Gastrocnemius medialis (tissue), 4 donors: ENCODE measurements at regions of chr9 and their contacts with region 1.

Region 1: DNA sequence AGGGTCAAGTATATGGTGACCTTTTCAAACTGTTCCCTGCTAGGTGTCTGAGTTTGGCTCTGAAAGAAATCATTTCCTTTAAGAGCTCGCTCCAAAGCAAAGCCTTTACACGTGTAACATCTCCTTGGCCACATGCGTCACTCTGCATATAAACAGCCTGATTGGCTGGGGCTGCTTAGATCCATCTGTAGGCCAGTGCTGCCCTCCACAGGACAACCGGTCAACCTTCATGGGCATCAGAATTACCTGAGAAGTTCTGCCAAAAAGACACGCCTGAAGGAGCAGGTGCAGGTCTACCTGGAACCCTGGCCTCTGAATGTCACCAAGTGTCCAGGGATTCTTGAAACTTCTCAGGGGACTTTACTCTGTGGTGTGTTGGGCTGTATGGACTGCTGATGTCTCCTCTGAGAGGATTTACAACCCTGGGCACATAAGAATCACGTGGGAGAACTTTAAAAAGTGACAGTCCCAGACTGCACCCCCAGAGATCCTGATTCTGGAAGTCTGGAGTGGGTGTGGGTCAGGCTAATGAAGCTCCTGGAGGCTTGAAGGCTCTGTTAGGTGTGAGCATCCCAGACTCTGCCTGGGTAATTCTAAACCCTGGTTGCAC is 497.6 kb downstream of the GADD45G start:
- DNase-seq: peak; percentile 81 to 83
- ATAC-seq: peak; percentile 59 to 80
- H3K4me3 ChIP-seq: no peak overlapping the region
- H3K27ac ChIP-seq: no peak overlapping the region
- H3K4me1 ChIP-seq: peaks cover 30 to 32% of the 10 kb centered on the region in 2 donors
- H3K27me3 ChIP-seq: no peaks in the 10 kb centered on the region
- CTCF ChIP-seq: peak; percentile 79 to 89 (median 80)
- POLR2A ChIP-seq: no peak

Region 2: DNA sequence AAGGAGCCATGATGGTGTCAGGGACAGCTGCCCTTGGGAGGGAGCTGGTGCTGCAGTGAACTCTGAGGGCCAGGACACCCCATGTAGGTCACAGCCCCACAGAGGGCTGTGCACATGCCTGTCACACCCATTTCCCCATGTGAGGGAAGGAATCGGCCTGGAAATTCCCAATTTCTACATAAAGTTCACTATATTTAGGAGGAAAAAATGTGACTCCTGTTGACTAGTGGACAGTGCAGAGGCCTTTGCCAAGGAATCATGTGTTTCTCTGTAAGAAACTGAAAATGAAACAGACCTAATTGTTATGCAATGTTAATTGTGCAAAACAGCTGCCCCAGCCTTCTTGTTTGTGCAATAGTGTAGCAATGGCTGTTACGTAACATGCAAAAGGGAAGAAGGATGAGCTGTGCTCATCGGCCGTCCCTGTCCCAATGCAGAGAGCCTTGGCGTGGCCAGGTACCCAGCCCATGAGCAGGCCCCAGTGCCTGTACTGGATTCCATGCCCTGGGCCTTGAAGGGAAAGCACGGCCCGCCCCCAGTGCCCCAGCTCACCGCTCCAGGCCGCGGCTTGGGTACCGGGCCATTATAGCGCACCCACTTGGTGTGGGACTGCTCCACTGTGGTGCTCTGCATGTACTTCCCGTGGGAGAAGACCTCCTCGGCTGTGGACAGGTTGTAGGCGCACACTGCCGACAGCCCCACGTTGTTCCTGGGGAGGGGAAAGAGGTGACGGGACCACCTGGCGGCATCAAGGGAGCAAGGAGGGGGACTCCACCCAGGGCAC is 714.1 kb before region 1 on chr9:
- in situ Hi-C with region 1: no loop called
- intact Hi-C with region 1: loop called (anchors 5 kb)
- DNase-seq: peak; percentile 85 to 94
- ATAC-seq: peak; percentile 83 to 87
- H3K4me3 ChIP-seq: no peak overlapping the region
- H3K27ac ChIP-seq: peak overlapping the region; percentile 79 to 93 (median 88)
- H3K4me1 ChIP-seq: peaks cover 20 to 26% of the 10 kb centered on the region in 2 donors
- H3K27me3 ChIP-seq: no peaks in the 10 kb centered on the region
- CTCF ChIP-seq: peak in 2 of 5 experiments; percentile 10 to 38
- POLR2A ChIP-seq: peak in 1 of 2 donors; percentile 19

Region 3: DNA sequence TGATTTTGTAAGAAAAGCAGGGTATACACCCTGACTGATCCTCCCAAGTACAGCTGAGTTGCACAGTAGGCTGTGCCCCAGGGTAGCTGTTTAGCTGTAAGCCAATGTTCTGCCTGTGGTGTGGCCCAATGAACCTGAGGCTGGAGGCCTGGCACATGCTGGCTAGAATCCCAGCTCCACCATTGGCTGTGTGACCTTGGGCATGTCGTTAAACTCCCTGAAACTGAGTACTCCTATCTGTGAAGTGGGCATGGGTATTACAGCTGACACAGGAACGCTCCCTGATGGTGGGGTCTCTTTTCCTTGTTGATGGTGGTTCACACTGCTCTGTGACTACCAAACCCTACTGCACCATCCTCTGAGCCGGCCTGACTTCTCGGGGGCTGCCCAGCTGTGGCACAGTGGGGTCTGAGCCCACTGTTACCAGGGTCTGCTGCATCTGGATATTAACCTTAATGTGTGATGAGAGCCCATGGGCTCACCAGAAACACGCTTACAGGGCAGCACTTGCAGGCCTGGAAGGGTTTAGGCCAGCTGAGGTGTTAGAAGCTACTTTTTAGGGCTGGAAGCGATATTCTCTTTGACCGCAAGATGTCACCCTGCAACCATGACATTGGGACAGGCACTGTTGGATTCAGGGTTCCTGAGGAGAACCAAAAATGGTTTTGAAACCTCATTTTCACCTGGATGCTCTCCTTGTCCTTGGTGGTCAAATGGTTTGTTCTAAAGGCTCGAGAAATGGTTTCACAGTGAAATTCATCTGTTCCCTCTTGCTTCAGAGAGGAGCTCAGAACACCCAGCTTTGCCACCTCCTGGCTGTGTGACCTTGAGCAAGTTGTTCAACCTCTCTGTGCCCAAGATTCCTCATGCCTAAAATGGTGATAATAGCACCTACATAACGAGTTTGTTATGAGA is 504.4 kb before region 1 on chr9:
- in situ Hi-C with region 1: loop called (anchors 5 kb)
- intact Hi-C with region 1: loop called (anchors 1 kb)
- DNase-seq: peak in 1 of 2 donors; percentile 52
- ATAC-seq: peak; percentile 55 to 59
- H3K4me3 ChIP-seq: no peak overlapping the region
- H3K27ac ChIP-seq: no peak overlapping the region
- H3K4me1 ChIP-seq: no peaks in the 10 kb centered on the region
- H3K27me3 ChIP-seq: no peaks in the 10 kb centered on the region
- CTCF ChIP-seq: peak; percentile 73 to 87 (median 82)
- POLR2A ChIP-seq: no peak

Region 4: DNA sequence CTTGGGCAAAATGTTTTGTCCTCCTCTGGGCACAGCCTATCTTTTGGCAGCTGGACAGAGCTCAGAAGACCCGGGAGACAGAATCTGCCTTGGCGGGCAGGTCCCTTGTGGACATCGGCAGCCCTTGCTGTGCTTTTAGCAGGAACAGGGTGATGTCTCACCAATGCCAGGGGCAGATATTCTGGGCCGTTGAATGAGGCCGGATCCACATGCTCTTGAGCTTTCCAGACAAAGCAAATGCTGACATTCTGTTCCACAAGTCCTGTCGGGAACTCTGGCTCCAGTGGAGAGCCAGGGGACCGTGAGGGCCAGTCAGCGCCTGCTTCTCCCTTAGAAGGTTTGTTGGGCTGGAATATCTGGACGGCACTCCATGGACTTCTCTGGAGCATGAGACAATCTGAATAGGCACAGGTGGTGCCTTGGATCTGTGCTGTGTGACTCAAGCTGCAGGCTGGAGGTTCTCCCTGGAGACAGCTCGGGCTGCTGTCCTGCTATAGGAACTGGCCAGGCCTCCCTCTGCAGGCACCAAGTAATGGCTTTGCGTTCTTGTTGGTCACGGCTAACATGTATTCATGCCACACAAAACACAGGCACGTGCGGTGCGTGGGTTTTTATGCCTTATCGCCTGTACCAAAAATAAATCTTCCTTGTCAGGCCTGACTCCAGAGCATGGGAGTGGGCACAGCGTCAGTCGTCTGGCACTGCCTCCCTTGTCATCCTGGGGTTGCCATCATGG is 417.3 kb before region 1 on chr9:
- in situ Hi-C with region 1: no loop called
- intact Hi-C with region 1: loop called (anchors 2 kb)
- DNase-seq: peak; percentile 80 to 84
- ATAC-seq: peak; percentile 89 to 91
- H3K4me3 ChIP-seq: no peak overlapping the region
- H3K27ac ChIP-seq: peak overlapping the region; percentile 64 to 90 (median 78)
- H3K4me1 ChIP-seq: peaks cover 18 to 24% of the 10 kb centered on the region in 2 donors
- H3K27me3 ChIP-seq: no peaks in the 10 kb centered on the region
- CTCF ChIP-seq: peak in 1 of 5 experiments; percentile 13
- POLR2A ChIP-seq: no peak

Region 5: GRCh38 chr9:89878687-89879086 is 223.7 kb before region 1 on chr9:
- in situ Hi-C with region 1: no loop called
- intact Hi-C with region 1: loop called (anchors 5 kb)
- DNase-seq: peak; percentile 93 to 98
- ATAC-seq: peak; percentile 80 to 86
- H3K4me3 ChIP-seq: no peak overlapping the region
- H3K27ac ChIP-seq: peak overlapping the region; percentile 82 to 96 (median 90)
- H3K4me1 ChIP-seq: peaks cover 59 to 66% of the 10 kb centered on the region in 2 donors
- H3K27me3 ChIP-seq: no peaks in the 10 kb centered on the region
- CTCF ChIP-seq: no peak
- POLR2A ChIP-seq: peak; percentile 54 to 70

Region 6: GRCh38 chr9:89941875-89942274 is 160.5 kb before region 1 on chr9:
- in situ Hi-C with region 1: no loop called
- intact Hi-C with region 1: loop called (anchors 10 kb)
- DNase-seq: peak in 1 of 2 donors; percentile 43
- ATAC-seq: peak; percentile 99 to 100
- H3K4me3 ChIP-seq: no peak overlapping the region
- H3K27ac ChIP-seq: peak overlapping the region; percentile 63 to 75 (median 68)
- H3K4me1 ChIP-seq: peaks cover 18 to 24% of the 10 kb centered on the region in 2 donors
- H3K27me3 ChIP-seq: no peaks in the 10 kb centered on the region
- CTCF ChIP-seq: no peak
- POLR2A ChIP-seq: no peak

Region 7: DNA sequence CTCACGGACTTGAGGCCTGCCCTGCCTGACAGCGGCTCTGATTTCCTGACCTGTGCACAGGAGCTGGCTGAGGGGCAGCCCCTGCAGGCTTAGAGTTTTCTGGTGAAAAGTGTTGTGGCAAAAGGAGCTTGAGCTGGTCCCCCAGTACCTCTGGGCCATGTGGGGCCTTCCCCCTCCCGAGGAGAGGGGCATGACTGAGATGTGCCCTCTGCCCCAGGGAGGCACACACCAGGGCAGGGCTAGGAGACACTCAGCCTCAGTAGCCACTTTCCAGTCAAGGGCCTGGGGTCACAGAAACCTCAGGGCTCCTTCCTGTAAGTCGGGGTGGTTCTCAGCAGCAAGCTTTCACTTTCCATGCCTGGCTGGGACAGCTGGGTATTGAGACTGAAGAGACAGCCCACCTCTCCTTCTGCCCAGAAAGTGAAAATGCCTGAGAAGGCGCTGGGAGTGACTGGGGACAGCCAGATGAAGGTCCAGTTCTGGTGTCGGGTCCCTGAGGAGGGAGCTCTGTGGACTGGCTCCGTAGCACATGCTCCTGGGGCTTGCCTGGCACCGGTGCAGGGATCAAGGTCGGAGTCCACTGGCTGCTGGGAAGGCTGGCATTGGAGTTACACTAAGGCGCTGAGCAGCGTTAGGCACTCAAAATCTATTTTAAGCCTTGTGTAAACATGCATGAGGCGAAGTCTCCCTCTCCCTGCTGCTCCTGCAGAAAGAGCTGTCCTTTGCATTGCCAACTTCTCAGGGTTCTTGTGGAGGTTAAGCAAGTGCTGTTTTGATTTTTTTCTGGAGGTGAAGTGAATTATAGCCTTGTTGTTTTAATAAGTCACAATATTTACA is 102.6 kb before region 1 on chr9:
- in situ Hi-C with region 1: loop called in 1 of 4 experiments (anchors 25 kb)
- intact Hi-C with region 1: loop called (anchors 2 kb)
- DNase-seq: peak; percentile 82 to 89
- ATAC-seq: peak; percentile 94 to 96
- H3K4me3 ChIP-seq: peak overlapping the region in 3 of 4 donors; percentile 36 to 42 (median 41)
- H3K27ac ChIP-seq: peak overlapping the region; percentile 72 to 89 (median 82)
- H3K4me1 ChIP-seq: peaks cover 45 to 46% of the 10 kb centered on the region in 2 donors
- H3K27me3 ChIP-seq: no peaks in the 10 kb centered on the region
- CTCF ChIP-seq: peak in 1 of 5 experiments; percentile 7
- POLR2A ChIP-seq: no peak

Region 8: GRCh38 chr9:91060503-91061343 is 958.3 kb after region 1 on chr9:
- in situ Hi-C with region 1: no loop called
- intact Hi-C with region 1: no loop called
- DNase-seq: peak; percentile 70 to 81
- ATAC-seq: peak; percentile 71 to 73
- H3K4me3 ChIP-seq: no peak overlapping the region
- H3K27ac ChIP-seq: peak overlapping the region; percentile 82 to 87 (median 84)
- H3K4me1 ChIP-seq: peaks cover 42 to 43% of the 10 kb centered on the region in 2 donors
- H3K27me3 ChIP-seq: no peaks in the 10 kb centered on the region
- CTCF ChIP-seq: no peak
- POLR2A ChIP-seq: peak in 1 of 2 donors; percentile 12